GM12878 (cell line): ENCODE measurements at regions of chr17 and their contacts with region 1.

Region 1: GRCh38 chr17:40287494-40288369 is at the start of gene CDC6:
- DNase-seq: peak; percentile 95
- ATAC-seq: peak; percentile 96
- H3K4me3 ChIP-seq: peak within 1 kb of the TSS; percentile 80
- H3K27ac ChIP-seq: peak within 1 kb of the TSS; percentile 79
- H3K4me1 ChIP-seq: peaks cover 9% of the 10 kb centered on the region
- H3K27me3 ChIP-seq: no peaks in the 10 kb centered on the region
- CTCF ChIP-seq: no peak
- EP300 ChIP-seq: no peak
- POLR2A ChIP-seq: peak; percentile 97
- RAD21 ChIP-seq: no peak
- polyA plus RNA-seq, gene CDC6: 13.3 to 18.6 TPM

Region 2: GRCh38 chr17:40021451-40021971 is 266.2 kb before region 1 on chr17:
- CTCF ChIA-PET with region 1: interaction called, 3 read pairs
- POLR2A ChIA-PET with region 1: no interaction called
- RAD21 ChIA-PET with region 1: no interaction called
- SMC1A ChIA-PET with region 1: no interaction called
- in situ Hi-C with region 1: loop called (anchors 25 kb)
- intact Hi-C with region 1: no loop called
- DNase-seq: no peak
- ATAC-seq: no peak
- H3K4me3 ChIP-seq: no peak overlapping the region
- H3K27ac ChIP-seq: no peak overlapping the region
- H3K4me1 ChIP-seq: no peaks in the 10 kb centered on the region
- H3K27me3 ChIP-seq: no peaks in the 10 kb centered on the region
- CTCF ChIP-seq: no peak
- EP300 ChIP-seq: no peak
- POLR2A ChIP-seq: no peak
- RAD21 ChIP-seq: no peak

Region 3: GRCh38 chr17:40203131-40203530 is 84.6 kb before region 1 on chr17:
- CTCF ChIA-PET with region 1: interaction called, 186 read pairs
- POLR2A ChIA-PET with region 1: interaction called, 15 read pairs
- RAD21 ChIA-PET with region 1: interaction called, 44 read pairs
- SMC1A ChIA-PET with region 1: interaction called, 30 read pairs
- in situ Hi-C with region 1: no loop called
- intact Hi-C with region 1: loop called (anchors 1 kb)
- DNase-seq: no peak
- ATAC-seq: no peak
- H3K4me3 ChIP-seq: no peak overlapping the region
- H3K27ac ChIP-seq: no peak overlapping the region
- H3K4me1 ChIP-seq: no peaks in the 10 kb centered on the region
- H3K27me3 ChIP-seq: no peaks in the 10 kb centered on the region
- CTCF ChIP-seq: no peak
- EP300 ChIP-seq: no peak
- POLR2A ChIP-seq: no peak
- RAD21 ChIP-seq: no peak

Region 4: GRCh38 chr17:40242774-40243173 is 45.0 kb before region 1 on chr17:
- CTCF ChIA-PET with region 1: interaction called, 4 read pairs
- POLR2A ChIA-PET with region 1: no interaction called
- RAD21 ChIA-PET with region 1: interaction called, 3 read pairs
- SMC1A ChIA-PET with region 1: no interaction called
- in situ Hi-C with region 1: no loop called
- intact Hi-C with region 1: loop called (anchors 5 kb)
- DNase-seq: no peak
- ATAC-seq: no peak
- H3K4me3 ChIP-seq: no peak overlapping the region
- H3K27ac ChIP-seq: no peak overlapping the region
- H3K4me1 ChIP-seq: no peaks in the 10 kb centered on the region
- H3K27me3 ChIP-seq: no peaks in the 10 kb centered on the region
- CTCF ChIP-seq: no peak
- EP300 ChIP-seq: no peak
- POLR2A ChIP-seq: no peak
- RAD21 ChIP-seq: no peak

Region 5: DNA sequence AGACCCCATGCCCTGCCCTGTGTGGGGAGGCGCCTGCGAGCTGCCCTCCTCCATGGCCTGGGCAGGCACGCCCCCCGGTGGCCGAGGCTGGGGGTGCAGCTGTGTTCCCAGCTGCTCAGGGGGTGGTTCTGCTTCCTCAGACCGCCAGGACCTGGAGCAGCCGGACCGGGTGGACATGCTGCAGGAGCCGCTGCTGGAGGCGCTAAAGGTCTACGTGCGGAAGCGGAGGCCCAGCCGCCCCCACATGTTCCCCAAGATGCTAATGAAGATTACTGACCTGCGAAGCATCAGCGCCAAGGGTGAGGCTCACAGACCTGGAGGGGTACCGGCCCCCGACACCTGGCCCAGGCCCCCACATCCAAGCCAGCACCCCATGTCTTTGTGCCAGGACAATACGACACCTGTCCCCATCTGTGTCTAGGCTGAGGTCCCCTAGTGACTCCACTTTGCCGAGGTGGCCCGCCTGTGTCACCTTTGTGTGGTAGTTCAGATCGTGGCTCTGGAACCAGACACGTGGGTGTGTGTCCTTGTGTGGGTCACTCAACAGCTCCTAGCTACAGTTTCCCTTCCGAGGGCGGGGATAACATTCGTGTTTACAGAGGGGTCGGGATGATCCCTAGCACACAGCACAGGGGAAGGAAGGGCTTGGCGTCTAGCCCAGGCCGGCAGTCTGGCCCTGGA is 67.5 kb after region 1 on chr17:
- CTCF ChIA-PET with region 1: interaction called, 41 read pairs
- POLR2A ChIA-PET with region 1: no interaction called
- RAD21 ChIA-PET with region 1: interaction called, 5 read pairs
- SMC1A ChIA-PET with region 1: interaction called, 4 read pairs
- in situ Hi-C with region 1: no loop called
- intact Hi-C with region 1: no loop called
- DNase-seq: no peak
- ATAC-seq: peak; percentile 89
- H3K4me3 ChIP-seq: no peak overlapping the region
- H3K27ac ChIP-seq: no peak overlapping the region
- H3K4me1 ChIP-seq: peaks cover 15% of the 10 kb centered on the region
- H3K27me3 ChIP-seq: peaks cover 0 to 2% of the 10 kb centered on the region in 2 experiments; a peak in 1 of 4 replicates
- CTCF ChIP-seq: peak; percentile 84 to 96 (median 96)
- EP300 ChIP-seq: no peak
- POLR2A ChIP-seq: peak; percentile 42
- RAD21 ChIP-seq: peak; percentile 96